HEK293T (cell line): ENCODE measurements at regions of chrX and their contacts with region 1.

Region 1: GRCh38 chrX:72018277-72019112 is 107.8 kb downstream of the NHSL2 start:
- DNase-seq: peak; percentile 98

Region 2: GRCh38 chrX:71640002-71640401 is 378.5 kb before region 1 on chrX:
- CTCF ChIA-PET with region 1: no interaction called
- POLR2A ChIA-PET with region 1: no interaction called
- DNase-seq: no peak

Region 3: DNA sequence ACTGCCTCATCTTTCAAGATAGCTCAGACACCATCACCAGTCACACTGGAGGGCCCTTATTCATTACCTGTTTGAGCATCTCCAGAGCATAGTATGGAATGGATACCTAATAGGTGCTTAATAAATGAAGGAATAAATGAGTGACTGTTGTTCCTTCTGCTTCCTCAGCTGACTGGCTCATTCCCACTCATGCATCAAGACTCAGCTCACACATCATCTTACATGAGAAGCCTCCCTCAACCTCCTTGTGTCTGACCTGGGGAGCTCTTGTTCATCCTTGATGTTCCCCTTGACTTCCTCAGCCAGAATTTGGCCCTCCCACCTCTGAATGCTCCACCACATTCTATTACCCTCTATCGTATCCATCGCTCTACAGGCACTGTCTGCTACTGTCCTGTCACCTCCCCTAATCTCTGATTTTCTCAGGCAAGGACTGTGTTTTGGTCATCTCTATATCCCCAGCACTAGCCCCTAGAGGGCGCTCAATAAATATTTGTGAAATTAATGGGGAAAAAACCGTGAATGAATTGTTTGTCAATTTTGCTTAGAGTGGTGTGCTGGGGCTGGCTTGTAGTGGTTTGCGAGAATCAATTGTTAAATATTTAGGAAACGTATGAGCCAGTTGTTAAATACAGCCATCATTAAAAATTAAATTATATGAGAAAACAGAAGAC is 19.5 kb before region 1 on chrX:
- CTCF ChIA-PET with region 1: interaction called, 22 read pairs
- POLR2A ChIA-PET with region 1: no interaction called
- DNase-seq: peak; percentile 65

Region 4: GRCh38 chrX:72003811-72004750 is 14.4 kb before region 1 on chrX:
- CTCF ChIA-PET with region 1: interaction called, 22 read pairs
- POLR2A ChIA-PET with region 1: interaction called, 3 read pairs
- DNase-seq: peak; percentile 61

Region 5: GRCh38 chrX:72029483-72030411 is 11.3 kb after region 1 on chrX:
- CTCF ChIA-PET with region 1: interaction called, 66 read pairs
- POLR2A ChIA-PET with region 1: interaction called, 21 read pairs
- DNase-seq: no peak

Region 6: GRCh38 chrX:72045552-72046277 is 27.2 kb after region 1 on chrX:
- CTCF ChIA-PET with region 1: interaction called, 14 read pairs
- POLR2A ChIA-PET with region 1: interaction called, 3 read pairs
- DNase-seq: peak; percentile 56

Region 7: DNA sequence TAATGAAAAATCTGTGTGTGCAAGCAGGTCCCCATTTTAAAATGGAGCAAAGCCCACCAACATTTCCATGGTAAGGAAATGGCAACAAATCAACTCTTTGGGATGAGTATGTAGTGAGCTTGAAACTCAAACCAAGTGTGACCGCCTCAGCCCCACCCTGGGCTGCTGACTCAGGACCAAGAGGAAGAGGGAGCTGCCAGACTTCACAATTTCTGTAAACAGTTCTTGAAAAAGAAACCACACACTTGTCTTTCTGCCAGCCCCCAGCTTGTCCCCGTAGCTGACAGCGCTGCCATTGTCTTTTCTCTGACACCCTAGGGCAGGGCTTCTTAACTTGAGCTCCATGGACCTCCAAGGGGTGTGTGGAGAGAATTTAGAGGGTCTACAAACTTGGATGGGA is 102.9 kb after region 1 on chrX:
- CTCF ChIA-PET with region 1: interaction called, 37 read pairs
- POLR2A ChIA-PET with region 1: interaction called, 14 read pairs
- DNase-seq: no peak

Region 8: GRCh38 chrX:72126539-72127140 is 108.1 kb after region 1 on chrX:
- CTCF ChIA-PET with region 1: interaction called, 37 read pairs
- POLR2A ChIA-PET with region 1: interaction called, 14 read pairs
- DNase-seq: peak; percentile 93